Gastrocnemius medialis (tissue), 4 donors: ENCODE measurements at regions of chr1 and their contacts with region 1.

Region 1: GRCh38 chr1:12356004-12356890 is 126.4 kb downstream of the VPS13D start:
- DNase-seq: peak; percentile 21 to 41
- ATAC-seq: peak; percentile 83 to 89
- H3K4me3 ChIP-seq: no peak overlapping the region
- H3K27ac ChIP-seq: peak overlapping the region; percentile 40 to 74 (median 58)
- H3K4me1 ChIP-seq: peaks cover 10 to 15% of the 10 kb centered on the region in 2 donors
- H3K27me3 ChIP-seq: no peaks in the 10 kb centered on the region
- CTCF ChIP-seq: no peak
- POLR2A ChIP-seq: no peak

Region 2: GRCh38 chr1:12320516-12320915 is 35.7 kb before region 1 on chr1:
- in situ Hi-C with region 1: no loop called
- intact Hi-C with region 1: loop called (anchors 5 kb)
- DNase-seq: no peak
- ATAC-seq: no peak
- H3K4me3 ChIP-seq: no peak overlapping the region
- H3K27ac ChIP-seq: no peak overlapping the region
- H3K4me1 ChIP-seq: no peaks in the 10 kb centered on the region
- H3K27me3 ChIP-seq: no peaks in the 10 kb centered on the region
- CTCF ChIP-seq: no peak
- POLR2A ChIP-seq: no peak